Activated T-helper 1 cell treated with anti-CD3 and anti-CD28 coated beads, Interleukin-12 subunit alpha, Interleukin-12 subunit beta, Interleukin-2, Interleukin-4 antibody, amounts not matched to agents 30 ng/mL and 10 ng/mL and 1 ng/mL, durations not matched to agents 14 hours and 24 hours and 36 hours (primary cell): ENCODE measurements at regions of chr12 and their contacts with region 1.

Region 1: GRCh38 chr12:54579696-54580333 is 8.6 kb downstream of the PPP1R1A start:
- DNase-seq: peak; percentile 66
- H3K4me3 Mint-ChIP-seq: no peak overlapping the region
- H3K27ac Mint-ChIP-seq: no peak overlapping the region
- H3K4me1 Mint-ChIP-seq: no peaks in the 10 kb centered on the region
- H3K27me3 Mint-ChIP-seq: peaks cover 17% of the 10 kb centered on the region

Region 2: DNA sequence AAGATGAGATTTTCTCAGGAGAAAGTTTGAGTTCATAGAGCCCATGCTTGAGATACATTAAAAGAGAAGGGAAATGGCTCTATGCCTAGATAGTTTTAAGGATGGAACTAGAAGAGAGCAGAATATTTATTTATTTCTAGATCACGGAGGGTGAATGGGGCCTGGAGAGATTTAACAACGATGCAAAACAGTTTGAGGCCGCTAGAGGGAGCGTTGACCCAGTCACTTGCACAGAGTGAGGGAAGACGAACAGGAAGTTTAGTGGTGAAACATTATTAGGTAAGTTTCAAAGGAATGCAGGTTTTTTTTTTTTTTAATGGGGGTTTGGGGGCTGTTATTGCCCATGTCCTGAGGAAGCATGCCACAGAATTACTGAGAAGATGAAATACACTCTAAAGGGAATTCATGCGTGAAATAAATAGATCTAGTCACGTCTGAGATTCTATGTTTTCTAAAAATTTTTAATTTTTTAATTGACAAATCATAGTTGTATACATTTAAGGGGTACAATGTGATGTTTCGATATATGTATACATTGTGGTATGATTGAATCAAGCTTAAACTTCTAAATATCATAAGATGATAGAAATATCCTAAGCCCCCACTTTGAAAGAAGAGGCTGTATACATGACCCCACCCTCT is 23.5 kb after region 1 on chr12:
- intact Hi-C with region 1: loop called (anchors 1 kb)
- DNase-seq: peak; percentile 19
- H3K4me3 Mint-ChIP-seq: no peak overlapping the region
- H3K27ac Mint-ChIP-seq: no peak overlapping the region
- H3K4me1 Mint-ChIP-seq: peaks cover 7% of the 10 kb centered on the region
- H3K27me3 Mint-ChIP-seq: peaks cover 11% of the 10 kb centered on the region